Aorta (tissue), 5 donors: ENCODE measurements at regions of chr1 and their contacts with region 1.

Region 1: DNA sequence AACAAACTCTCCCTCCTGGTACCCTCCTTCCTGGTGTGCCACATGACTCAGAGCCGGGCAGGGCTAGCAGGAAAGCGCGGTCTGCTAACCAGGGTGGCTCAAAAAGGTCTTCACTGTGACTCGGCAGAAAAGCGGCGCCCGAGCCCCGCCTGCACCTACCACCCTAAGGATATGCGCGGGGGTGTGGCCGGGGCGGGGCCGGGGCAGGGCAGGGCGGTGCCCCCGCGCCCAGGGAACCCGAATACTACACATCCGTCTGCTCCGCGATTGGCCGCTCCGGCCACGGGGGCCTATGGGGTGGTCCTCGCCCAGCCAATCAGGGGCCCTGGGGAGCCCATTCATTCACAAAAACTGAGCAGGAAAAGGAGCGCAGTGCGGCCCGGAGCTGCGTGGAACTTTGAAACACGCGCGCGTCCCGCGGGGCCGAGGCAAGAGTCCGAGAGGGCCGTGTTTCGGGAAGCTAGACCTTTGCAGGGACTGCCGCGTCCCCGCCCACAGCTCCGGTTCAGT is 1.7 kb downstream of the LRP8 start:
- DNase-seq: peak; percentile 92 to 94
- ATAC-seq: peak; percentile 93
- H3K4me3 ChIP-seq: peak overlapping the region; percentile 71 to 80
- H3K27ac ChIP-seq: no peak overlapping the region
- H3K4me1 ChIP-seq: no peaks in the 10 kb centered on the region
- H3K27me3 ChIP-seq: no peaks in the 10 kb centered on the region

Region 2: DNA sequence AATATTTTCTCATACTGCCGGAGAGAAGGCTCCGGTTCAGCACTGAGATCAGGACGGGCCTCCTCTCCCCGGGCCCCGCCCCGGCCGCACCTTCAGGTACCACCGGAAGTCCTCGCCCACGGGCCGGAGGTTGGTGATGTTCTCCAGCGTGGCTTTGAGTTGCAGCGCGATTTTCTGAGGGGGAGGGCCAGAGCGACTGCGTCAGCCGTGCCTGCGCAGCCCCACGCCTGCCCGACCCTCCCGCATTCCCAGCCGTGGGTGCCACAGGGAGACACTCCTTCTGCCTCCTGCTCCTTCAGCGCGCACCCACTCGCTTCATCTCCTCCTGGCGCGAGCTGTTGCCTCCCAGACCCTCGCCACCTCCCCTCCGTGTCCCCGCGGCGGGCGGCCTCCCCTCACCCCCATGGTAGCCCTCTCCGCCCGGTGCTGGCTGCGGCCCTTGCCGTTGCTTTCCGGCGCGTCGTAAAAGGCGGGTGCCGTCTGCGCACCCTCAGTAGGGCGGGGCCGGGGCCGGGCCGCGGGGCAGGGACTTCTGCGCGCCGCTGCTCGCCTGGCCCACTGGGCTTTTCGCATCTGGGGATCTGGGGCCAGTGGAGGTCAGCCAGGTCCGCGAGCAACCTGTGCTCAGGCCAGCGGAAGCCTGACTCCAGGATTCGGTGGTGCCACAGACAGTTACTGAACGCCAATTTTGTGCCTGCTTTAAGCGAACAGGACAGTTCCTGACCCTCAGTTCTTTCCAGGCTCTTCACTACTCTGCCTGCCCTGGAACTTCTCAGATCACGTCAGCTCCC is 105.8 kb before region 1 on chr1 and contains the start of gene CZIB:
- intact Hi-C with region 1: no loop called
- DNase-seq: peak; percentile 97 to 99
- ATAC-seq: peak; percentile 99
- H3K4me3 ChIP-seq: peak within 1 kb of the TSS; percentile 37 to 83
- H3K27ac ChIP-seq: peak within 1 kb of the TSS; percentile 9 to 99
- H3K4me1 ChIP-seq: no peaks in the 10 kb centered on the region
- H3K27me3 ChIP-seq: no peaks in the 10 kb centered on the region
- total RNA-seq, gene CZIB: 45.6 to 66.5 TPM

Region 3: DNA sequence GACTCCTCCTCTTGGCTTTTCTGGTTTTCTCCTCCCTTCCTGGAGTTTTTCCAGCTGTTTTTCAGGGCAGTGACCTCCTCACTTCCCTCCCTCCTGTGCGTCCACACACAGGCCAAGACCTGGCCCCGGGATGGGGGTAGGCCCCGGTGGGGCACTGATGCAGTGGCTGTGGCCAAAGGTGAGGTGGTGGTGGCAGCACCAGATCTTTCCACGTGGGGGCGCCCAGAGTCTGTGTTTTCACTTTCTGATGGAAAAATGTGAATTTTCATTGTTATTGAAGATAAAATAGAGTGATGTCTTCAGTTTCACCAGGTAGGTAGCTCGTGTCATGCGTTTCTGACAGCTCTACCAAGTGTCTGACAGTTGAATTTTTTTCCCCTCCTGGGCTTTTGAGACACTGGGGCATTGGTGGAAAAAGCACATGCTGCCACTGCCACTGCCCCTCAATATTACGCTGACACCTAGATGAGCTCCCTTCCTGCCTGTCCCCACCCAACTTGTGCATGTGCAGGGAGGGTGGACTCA is 47.9 kb before region 1 on chr1:
- intact Hi-C with region 1: loop called in 1 of 2 experiments (anchors 5 kb)
- DNase-seq: peak; percentile 72 to 86
- ATAC-seq: no peak
- H3K4me3 ChIP-seq: no peak overlapping the region
- H3K27ac ChIP-seq: no peak overlapping the region
- H3K4me1 ChIP-seq: no peaks in the 10 kb centered on the region
- H3K27me3 ChIP-seq: no peaks in the 10 kb centered on the region

Region 4: GRCh38 chr1:53294567-53294966 is 31.6 kb before region 1 on chr1:
- intact Hi-C with region 1: loop called (anchors 1 to 5 kb)
- DNase-seq: no peak
- ATAC-seq: no peak
- H3K4me3 ChIP-seq: no peak overlapping the region
- H3K27ac ChIP-seq: peak overlapping the region; percentile 14 to 54
- H3K4me1 ChIP-seq: peaks cover 7 to 9% of the 10 kb centered on the region in 2 donors
- H3K27me3 ChIP-seq: no peaks in the 10 kb centered on the region

Region 5: DNA sequence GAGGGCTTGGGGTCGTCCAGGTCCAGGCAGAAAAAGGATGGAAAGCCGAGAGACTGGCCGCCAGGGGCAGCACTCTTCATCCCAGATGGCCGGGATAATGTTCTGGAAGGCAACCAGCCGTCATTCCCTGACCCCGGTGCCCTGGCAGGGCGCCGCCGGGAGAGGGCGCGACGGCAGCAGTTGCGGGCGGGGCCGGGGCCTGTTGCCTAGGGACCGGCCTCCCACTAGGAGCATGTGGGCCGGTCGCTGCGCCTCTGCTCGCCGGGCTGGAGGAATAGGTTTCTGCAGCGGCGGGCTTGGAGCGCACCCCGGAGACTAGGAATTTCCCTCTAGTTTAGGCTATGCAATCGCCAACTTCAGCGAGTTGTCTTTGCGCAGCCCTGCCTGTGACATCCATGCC is 144.0 kb after region 1 on chr1:
- intact Hi-C with region 1: no loop called
- DNase-seq: peak; percentile 69 to 85
- ATAC-seq: peak; percentile 64
- H3K4me3 ChIP-seq: no peak overlapping the region
- H3K27ac ChIP-seq: no peak overlapping the region
- H3K4me1 ChIP-seq: no peaks in the 10 kb centered on the region
- H3K27me3 ChIP-seq: no peaks in the 10 kb centered on the region